ENCODE measurements at regions of chr3 and their contacts with region 1.

Region 1: GRCh38 chr3:69120879-69121464 is 1.4 kb downstream of the LMOD3 start:
- DNase-seq: peak; percentile 88
- H3K4me3 Mint-ChIP-seq: no peak overlapping the region
- H3K27ac Mint-ChIP-seq: no peak overlapping the region
- H3K4me1 Mint-ChIP-seq: no peaks in the 10 kb centered on the region
- H3K27me3 Mint-ChIP-seq: peaks cover 21% of the 10 kb centered on the region

Region 2: GRCh38 chr3:69092030-69092516 is 28.9 kb before region 1 on chr3:
- CTCF ChIA-PET with region 1: interaction called, 13 read pairs
- DNase-seq: peak; percentile 50
- H3K4me3 Mint-ChIP-seq: peak overlapping the region; percentile 72
- H3K27ac Mint-ChIP-seq: peak overlapping the region; percentile 98
- H3K4me1 Mint-ChIP-seq: peaks cover 84% of the 10 kb centered on the region
- H3K27me3 Mint-ChIP-seq: no peaks in the 10 kb centered on the region

Measured in activated naive CD4-positive, alpha-beta T cell treated with anti-CD3 and anti-CD28 coated beads, Interleukin-2, amount 10 ng/mL, durations not matched to agents 7 days and 5 days (primary cell).